ENCODE measurements at regions of chr7 and their contacts with region 1.

Region 1: DNA sequence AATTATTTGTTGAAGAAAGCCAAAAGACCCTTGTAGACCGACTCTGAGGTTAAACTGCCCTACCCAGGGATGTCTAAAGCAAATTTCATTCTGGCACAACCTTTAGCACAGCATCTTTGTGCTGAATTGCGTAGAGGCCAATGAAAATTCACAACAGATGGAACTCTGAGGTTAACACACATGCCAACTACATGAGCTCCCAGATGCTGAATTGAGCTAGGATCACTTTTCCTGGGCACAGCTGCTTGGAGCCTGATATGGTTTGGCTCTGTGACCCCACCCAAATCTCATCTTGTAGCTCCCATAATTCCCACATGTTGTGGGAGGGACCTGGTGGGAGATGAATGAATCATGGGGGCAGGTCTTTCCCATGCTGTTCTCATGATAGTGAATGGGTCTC is 158.0 kb upstream of the PTN start:
- DNase-seq: no peak
- ATAC-seq: no peak
- H3K4me3 ChIP-seq: no peak overlapping the region
- H3K27ac ChIP-seq: no peak overlapping the region
- H3K4me1 ChIP-seq: no peaks in the 10 kb centered on the region
- H3K27me3 ChIP-seq: peaks cover 0 to 5% (median 0%) of the 10 kb centered on the region in 7 donors
- CTCF ChIP-seq: no peak

Region 2: GRCh38 chr7:137572056-137572784 is 70.7 kb after region 1 on chr7:
- intact Hi-C with region 1: no loop called
- DNase-seq: no peak
- ATAC-seq: no peak
- H3K4me3 ChIP-seq: no peak overlapping the region
- H3K27ac ChIP-seq: no peak overlapping the region
- H3K4me1 ChIP-seq: peaks cover 0 to 8% (median 0%) of the 10 kb centered on the region in 9 donors
- H3K27me3 ChIP-seq: no peaks in the 10 kb centered on the region
- CTCF ChIP-seq: no peak

Region 3: DNA sequence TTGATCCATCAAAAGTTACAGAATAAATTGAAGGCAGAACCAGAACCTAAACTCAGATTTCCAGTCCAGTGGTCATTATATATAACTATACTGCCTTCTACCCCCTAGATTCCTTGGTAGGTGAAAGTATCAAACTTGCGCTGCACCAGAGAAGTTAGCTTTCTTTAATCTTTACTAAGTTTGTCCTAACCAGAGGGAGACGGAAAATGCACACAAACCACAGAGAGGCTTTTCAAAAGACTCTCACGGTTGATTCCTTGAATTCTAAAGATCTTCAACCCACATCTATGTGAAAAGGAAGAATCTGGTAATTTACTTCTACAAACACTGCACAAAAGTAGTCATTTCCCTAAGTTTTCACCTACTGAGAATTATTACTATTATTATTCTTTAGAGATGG is 1497.9 kb after region 1 on chr7:
- intact Hi-C with region 1: loop called in 1 of 10 experiments (anchors 5 kb)
- DNase-seq: no peak
- ATAC-seq: no peak
- H3K4me3 ChIP-seq: no peak overlapping the region
- H3K27ac ChIP-seq: no peak overlapping the region
- H3K4me1 ChIP-seq: no peaks in the 10 kb centered on the region
- H3K27me3 ChIP-seq: peaks cover 0 to 4% (median 0%) of the 10 kb centered on the region in 7 donors
- CTCF ChIP-seq: no peak

Measured in heart right ventricle (tissue), 16 donors.